Common myeloid progenitor, CD34-positive (primary cell): ENCODE measurements at regions of chr17 and their contacts with region 1.

Region 1: DNA sequence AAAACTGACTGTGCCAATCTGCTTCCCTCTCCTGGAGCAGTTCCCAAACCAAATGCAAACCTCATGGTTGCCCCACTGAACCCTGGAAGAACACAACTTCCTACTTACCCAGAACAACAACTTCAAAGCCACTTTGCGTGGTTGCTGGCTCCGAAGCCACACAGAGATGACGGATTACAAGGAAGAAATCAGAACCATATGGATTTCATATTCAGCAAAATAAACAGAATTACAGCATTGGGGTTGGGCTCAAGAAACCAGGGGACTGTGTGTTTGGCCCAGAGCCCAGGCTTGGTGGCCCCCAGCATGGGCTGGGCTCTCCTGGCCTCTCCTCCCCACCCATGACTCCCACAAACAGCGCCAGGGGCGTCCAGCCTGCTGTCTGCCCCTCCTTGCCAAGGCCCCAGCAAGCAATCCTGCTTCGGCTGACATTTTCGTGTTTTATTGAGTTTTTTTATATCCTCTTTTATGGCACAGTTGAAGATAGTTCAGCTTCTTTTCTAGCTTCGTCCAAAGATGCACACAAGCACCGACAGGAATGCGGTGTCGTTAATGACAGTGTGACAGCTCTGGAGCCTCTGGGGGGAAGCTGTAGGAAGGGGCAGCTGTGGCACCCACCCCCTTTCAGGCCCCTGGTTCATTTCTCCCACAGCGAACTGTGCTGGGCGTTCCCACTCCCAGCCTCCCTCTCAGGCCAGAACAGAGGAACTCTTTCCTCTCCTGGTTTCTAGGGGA is 137.1 kb downstream of the GAS7 start:
- DNase-seq: no peak
- H3K4me3 ChIP-seq: no peak overlapping the region
- H3K27ac ChIP-seq: no peak overlapping the region
- H3K4me1 ChIP-seq: peaks cover 2 to 34% (median 30%) of the 10 kb centered on the region in 4 experiments
- H3K27me3 ChIP-seq: no peaks in the 10 kb centered on the region

Region 2: DNA sequence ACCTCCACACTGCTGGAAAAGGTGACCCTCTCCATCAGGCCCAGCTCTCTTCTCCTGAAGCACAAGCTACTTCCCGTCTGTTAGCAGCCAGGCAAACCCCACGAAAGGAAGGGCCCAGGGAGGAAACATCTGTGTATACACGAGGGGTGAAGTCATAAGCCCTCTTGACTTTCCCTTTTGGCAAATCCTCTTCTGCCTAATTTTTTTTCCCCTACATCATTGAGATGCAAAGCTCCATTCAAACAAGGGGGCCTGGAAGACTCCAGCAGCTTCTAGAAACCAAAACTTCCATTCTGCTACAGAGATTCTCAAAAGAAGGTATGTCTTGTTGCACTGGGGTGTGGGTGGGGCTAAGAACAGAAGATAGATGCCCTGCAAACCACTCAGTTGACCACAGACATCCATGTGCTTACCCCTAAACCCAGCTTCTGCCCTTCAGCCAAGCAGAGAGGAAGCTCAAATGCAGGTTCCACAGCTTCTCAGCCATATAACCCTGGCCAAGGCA is 10.6 kb before region 1 on chr17:
- CTCF ChIA-PET with region 1: interaction called, 11 read pairs
- POLR2A ChIA-PET with region 1: interaction called, 3 read pairs
- DNase-seq: peak; percentile 74 to 95 (median 93)
- H3K4me3 ChIP-seq: peak overlapping the region in 2 of 7 experiments; percentile 46 to 53
- H3K27ac ChIP-seq: peak overlapping the region in 1 of 2 experiments; percentile 20
- H3K4me1 ChIP-seq: peaks cover 14 to 45% (median 27%) of the 10 kb centered on the region in 4 experiments
- H3K27me3 ChIP-seq: no peaks in the 10 kb centered on the region

Region 3: GRCh38 chr17:10149573-10150399 is 88.5 kb after region 1 on chr17:
- CTCF ChIA-PET with region 1: no interaction called
- POLR2A ChIA-PET with region 1: no interaction called
- DNase-seq: peak; percentile 88 to 95 (median 93)
- H3K4me3 ChIP-seq: peak overlapping the region in 1 of 7 experiments; percentile 33
- H3K27ac ChIP-seq: no peak overlapping the region
- H3K4me1 ChIP-seq: peaks cover 19 to 67% (median 43%) of the 10 kb centered on the region in 4 experiments
- H3K27me3 ChIP-seq: no peaks in the 10 kb centered on the region